ENCODE measurements at regions of chr11 and their contacts with region 1.

Region 1: DNA sequence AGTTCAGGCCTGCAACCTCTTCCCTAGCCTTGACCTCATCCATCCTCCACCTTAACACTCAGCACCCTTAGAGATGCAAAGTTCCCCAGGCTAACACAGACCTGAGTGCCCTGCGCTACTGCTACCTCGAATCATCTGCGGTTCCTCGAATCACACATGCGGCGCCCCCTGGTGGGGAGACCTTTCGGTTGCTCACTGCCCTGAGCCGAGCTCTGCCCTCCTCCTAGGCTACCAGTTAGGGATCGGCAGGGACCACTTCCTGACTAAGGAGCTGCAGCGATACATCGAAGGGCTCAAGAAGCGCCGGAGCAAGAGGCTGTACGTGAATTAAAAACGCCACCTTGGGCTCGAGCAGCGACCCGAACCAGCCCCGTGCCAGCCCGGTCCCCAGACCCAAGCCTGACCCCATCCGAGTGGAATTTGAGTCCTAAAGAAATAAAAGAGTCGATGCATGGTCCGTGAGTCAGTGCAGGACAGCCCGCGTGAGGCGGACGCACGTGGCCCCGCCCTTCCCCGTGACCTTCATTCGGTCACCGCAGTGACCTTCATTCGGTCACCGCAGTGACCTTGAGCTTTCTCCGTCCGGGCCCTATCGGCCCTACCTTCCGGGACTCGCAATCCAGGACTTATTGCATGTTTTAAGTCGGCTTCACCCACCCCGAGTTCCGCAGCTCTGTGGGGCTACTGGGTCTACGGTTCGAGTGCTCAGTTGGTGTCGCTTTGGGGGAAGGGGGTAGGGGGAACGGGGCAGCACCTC is 830 bp upstream of the ESRRA start:
- DNase-seq: peak; percentile 84
- ATAC-seq: peak; percentile 13
- H3K4me3 Mint-ChIP-seq: peak overlapping the region; percentile 87
- H3K27ac Mint-ChIP-seq: peak overlapping the region; percentile 89
- H3K4me1 Mint-ChIP-seq: peaks cover 34% of the 10 kb centered on the region
- H3K27me3 Mint-ChIP-seq: peaks cover 11% of the 10 kb centered on the region
- CTCF ChIP-seq: peak; percentile 22

Region 2: GRCh38 chr11:64000026-64000739 is 304.3 kb before region 1 on chr11:
- CTCF ChIA-PET with region 1: interaction called, 3 read pairs
- POLR2A ChIA-PET with region 1: interaction called, 4 read pairs
- intact Hi-C with region 1: loop called (anchors 1 kb)
- DNase-seq: peak; percentile 72
- ATAC-seq: peak; percentile 75
- H3K4me3 Mint-ChIP-seq: peak overlapping the region; percentile 56
- H3K27ac Mint-ChIP-seq: no peak overlapping the region
- H3K4me1 Mint-ChIP-seq: peaks cover 9% of the 10 kb centered on the region
- H3K27me3 Mint-ChIP-seq: peaks cover 2% of the 10 kb centered on the region
- CTCF ChIP-seq: no peak

Region 3: GRCh38 chr11:64225612-64226506 is 78.6 kb before region 1 on chr11 and contains the starts of genes NUDT22 and TRPT1:
- CTCF ChIA-PET with region 1: no interaction called
- POLR2A ChIA-PET with region 1: interaction called, 6 read pairs
- intact Hi-C with region 1: loop called (anchors 1 kb)
- DNase-seq: peak; percentile 95
- ATAC-seq: peak; percentile 56
- H3K4me3 Mint-ChIP-seq: peak within 1 kb of the TSS; percentile 87
- H3K27ac Mint-ChIP-seq: peak within 1 kb of the TSS; percentile 81
- H3K4me1 Mint-ChIP-seq: peaks cover 39% of the 10 kb centered on the region
- H3K27me3 Mint-ChIP-seq: no peaks in the 10 kb centered on the region
- CTCF ChIP-seq: no peak
- total RNA-seq, gene NUDT22: 81.0 and 95.3 TPM in 2 replicates
- total RNA-seq, gene TRPT1: 50.6 and 51.3 TPM in 2 replicates

Region 4: DNA sequence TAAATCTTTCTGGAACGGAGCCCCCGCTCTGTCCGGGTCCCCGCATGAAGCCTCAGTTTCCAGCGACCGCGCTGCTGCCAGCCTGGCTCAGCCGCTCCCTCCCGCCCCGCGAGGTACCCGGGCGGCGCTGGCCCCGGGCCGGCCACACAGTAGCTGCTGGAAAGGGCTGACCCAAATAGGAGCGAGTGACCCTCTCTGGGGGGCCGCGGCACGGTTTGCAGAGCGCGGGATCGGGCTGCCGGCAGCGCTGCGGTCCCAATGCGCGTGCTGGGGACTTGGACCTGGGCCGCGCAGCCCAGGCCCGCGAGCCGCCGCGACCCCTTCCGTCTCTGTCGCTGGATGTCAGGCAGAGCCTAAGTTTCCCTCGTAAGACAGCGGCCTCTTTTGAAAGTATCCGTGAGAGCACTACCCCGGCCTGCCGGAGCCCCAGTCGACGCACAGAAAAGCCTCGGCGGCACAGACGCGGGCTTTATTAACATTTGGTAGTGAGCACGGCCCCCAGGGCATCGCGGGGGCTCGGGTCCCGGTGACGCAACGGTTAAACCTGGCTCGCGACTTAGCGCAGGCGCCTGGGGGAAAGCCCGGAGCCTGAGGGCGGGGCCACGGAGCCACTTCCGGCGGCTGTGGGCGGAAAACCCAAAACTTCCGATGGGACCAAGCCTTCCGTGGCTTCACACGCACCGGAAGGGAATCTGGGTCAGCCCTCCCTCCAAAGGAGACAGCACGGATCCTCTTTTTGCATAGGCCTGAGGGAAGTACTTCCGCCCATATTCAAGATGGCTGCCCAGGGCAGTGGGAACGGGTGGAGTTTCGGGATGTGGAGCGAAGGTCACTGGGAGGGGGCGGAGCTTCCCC is 34.9 kb before region 1 on chr11:
- CTCF ChIA-PET with region 1: interaction called, 55 read pairs
- POLR2A ChIA-PET with region 1: interaction called, 52 read pairs
- intact Hi-C with region 1: loop called (anchors 1 kb)
- DNase-seq: peak; percentile 97
- ATAC-seq: peak; percentile 72
- H3K4me3 Mint-ChIP-seq: peak overlapping the region; percentile 97
- H3K27ac Mint-ChIP-seq: peak overlapping the region; percentile 95
- H3K4me1 Mint-ChIP-seq: peaks cover 23% of the 10 kb centered on the region
- H3K27me3 Mint-ChIP-seq: no peaks in the 10 kb centered on the region
- CTCF ChIP-seq: no peak

Region 5: DNA sequence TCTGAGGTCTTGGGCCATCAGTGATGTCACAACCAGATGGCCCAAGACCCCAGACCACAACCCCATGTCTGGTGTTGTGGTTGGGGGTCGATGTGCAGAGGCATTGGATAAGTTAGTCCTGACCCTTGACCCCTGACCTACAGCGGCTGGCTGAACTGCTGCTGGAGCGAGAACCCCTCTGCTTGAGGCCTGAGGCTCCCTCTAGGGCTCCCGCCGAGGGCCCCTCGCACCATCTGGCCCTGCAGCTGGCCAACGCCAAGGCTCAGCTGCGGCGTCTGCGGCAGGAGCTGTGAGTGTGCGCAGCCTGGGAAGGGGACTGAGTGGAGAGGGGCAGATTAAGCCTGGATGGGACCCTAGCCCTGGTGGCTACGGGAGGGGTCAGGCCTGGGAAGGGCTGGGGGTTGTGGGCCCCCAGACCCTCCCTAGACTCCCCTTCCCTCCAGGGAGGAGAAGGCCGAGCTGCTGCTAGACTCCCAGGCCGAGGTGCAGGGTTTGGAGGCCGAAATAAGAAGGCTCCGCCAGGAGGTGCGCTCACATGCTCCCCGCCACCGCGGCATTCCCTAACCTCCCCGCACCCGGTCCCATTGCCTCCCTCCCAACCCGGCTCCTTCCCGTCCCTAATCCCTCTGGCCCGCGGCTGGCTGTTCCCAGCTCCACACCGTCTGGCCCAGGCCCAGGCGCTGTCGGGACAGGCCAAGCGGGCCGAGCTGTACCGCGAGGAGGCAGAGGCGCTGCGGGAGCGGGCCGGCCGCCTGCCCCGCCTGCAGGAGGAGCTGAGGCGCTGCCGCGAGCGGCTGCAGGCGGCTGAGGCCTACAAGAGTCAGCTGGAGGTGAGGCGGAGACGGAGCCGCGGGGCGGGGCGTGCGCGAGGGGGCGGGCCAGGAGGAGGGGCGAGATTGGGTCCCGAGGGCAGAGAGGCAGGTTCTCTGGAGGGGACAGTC is 37.6 kb after region 1 on chr11:
- CTCF ChIA-PET with region 1: interaction called, 5 read pairs
- POLR2A ChIA-PET with region 1: interaction called, 15 read pairs
- intact Hi-C with region 1: loop called (anchors 1 kb)
- DNase-seq: peak; percentile 87
- ATAC-seq: peak; percentile 51
- H3K4me3 Mint-ChIP-seq: peak overlapping the region; percentile 19
- H3K27ac Mint-ChIP-seq: no peak overlapping the region
- H3K4me1 Mint-ChIP-seq: peaks cover 54% of the 10 kb centered on the region
- H3K27me3 Mint-ChIP-seq: no peaks in the 10 kb centered on the region
- CTCF ChIP-seq: no peak

Region 6: DNA sequence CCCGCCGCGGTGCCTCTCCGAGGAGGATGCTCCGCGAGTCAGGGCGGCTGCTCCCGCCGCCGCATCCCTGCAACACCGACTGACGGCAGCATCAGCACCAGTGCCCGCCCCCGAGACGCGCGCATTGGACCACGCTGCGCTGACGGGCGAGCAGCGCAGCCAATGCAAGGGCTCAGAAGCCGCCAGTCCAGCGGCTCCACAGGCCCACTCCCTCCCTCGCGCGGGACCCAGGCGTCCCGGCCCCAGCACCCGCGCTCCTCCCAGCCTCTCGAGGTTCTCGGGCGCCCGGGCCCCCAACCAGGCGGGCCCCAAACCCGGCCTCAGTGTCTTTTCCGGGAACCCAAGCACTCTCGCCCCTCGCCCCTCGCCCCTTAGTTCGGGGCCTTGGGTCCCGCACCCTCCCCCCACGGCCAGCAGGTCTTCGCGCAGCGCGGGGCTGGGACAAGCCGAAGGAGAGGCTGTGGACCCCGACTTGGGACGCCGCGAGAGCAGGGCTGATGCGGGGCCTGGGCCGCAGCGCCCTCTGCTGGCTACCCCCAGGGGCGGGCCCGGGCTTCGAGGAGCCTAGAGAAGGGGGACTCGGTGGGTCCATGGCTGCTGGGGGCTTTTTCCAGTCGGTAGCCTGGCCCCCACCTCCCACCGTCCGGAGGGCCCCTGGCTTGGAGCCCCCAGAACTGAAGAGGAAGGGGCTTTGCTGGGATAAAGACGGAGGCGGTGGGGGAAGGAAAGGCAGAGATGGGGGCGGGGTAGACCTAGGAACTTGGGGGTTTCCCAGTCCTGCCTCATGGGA is 418.8 kb after region 1 on chr11 and contains the start of gene NRXN2:
- CTCF ChIA-PET with region 1: no interaction called
- POLR2A ChIA-PET with region 1: no interaction called
- intact Hi-C with region 1: loop called (anchors 1 kb)
- DNase-seq: peak; percentile 88
- ATAC-seq: peak; percentile 89
- H3K4me3 Mint-ChIP-seq: peak within 1 kb of the TSS; percentile 81
- H3K27ac Mint-ChIP-seq: peak within 1 kb of the TSS; percentile 76
- H3K4me1 Mint-ChIP-seq: peaks cover 22% of the 10 kb centered on the region
- H3K27me3 Mint-ChIP-seq: peaks cover 30% of the 10 kb centered on the region
- CTCF ChIP-seq: peak; percentile 64
- total RNA-seq, gene NRXN2: 0.54 and 0.73 TPM in 2 replicates